Endothelial cell of umbilical vein (primary cell): ENCODE measurements at regions of chr10 and their contacts with region 1.

Region 1: GRCh38 chr10:35119378-35119777 is 7.3 kb upstream of the CREM start:
- DNase-seq: no peak
- H3K4me3 ChIP-seq: no peak overlapping the region
- H3K27ac ChIP-seq: no peak overlapping the region
- H3K4me1 ChIP-seq: no peaks in the 10 kb centered on the region
- H3K27me3 ChIP-seq: peaks cover 0 to 2% of the 10 kb centered on the region in 2 experiments
- CTCF ChIP-seq: no peak
- POLR2A ChIP-seq: no peak

Region 2: DNA sequence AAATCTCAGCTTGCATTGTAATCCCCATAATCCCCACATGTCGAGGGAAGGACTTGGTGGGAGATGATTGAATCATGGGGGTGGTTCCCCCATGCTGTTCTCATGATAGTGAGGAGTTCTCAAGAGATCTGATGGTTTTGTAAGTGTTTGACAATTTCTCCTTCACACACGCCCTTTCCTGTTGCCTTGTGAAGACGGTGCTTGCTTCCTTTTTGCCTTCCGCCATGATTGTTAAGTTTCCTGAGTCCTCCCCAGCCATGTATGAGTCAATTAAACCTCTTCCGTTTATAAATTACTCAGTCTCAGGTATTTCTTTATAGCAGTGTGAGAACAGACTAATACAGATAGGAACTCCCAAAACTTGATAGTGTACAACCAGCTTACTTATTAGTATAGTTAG is 105.8 kb after region 1 on chr10:
- CTCF ChIA-PET with region 1: interaction called, 103 read pairs
- POLR2A ChIA-PET with region 1: no interaction called
- dilution Hi-C with region 1: loop called (anchors 25 kb)
- intact Hi-C with region 1: no loop called
- DNase-seq: peak; percentile 84
- H3K4me3 ChIP-seq: no peak overlapping the region
- H3K27ac ChIP-seq: peak overlapping the region; percentile 30
- H3K4me1 ChIP-seq: peaks cover 18% of the 10 kb centered on the region
- H3K27me3 ChIP-seq: no peaks in the 10 kb centered on the region
- CTCF ChIP-seq: peak in 1 of 2 donors; percentile 9
- POLR2A ChIP-seq: no peak

Region 3: GRCh38 chr10:35236739-35237138 is 117.4 kb after region 1 on chr10:
- CTCF ChIA-PET with region 1: interaction called, 18 read pairs
- POLR2A ChIA-PET with region 1: no interaction called
- dilution Hi-C with region 1: no loop called
- intact Hi-C with region 1: no loop called
- DNase-seq: peak; percentile 26
- H3K4me3 ChIP-seq: no peak overlapping the region
- H3K27ac ChIP-seq: no peak overlapping the region
- H3K4me1 ChIP-seq: no peaks in the 10 kb centered on the region
- H3K27me3 ChIP-seq: no peaks in the 10 kb centered on the region
- CTCF ChIP-seq: peak; percentile 12 to 35
- POLR2A ChIP-seq: no peak